ENCODE measurements at regions of chr1 and their contacts with region 1.

Region 1: GRCh38 chr1:211258756-211259637 is at the start of gene RCOR3:
- DNase-seq: peak; percentile 91
- H3K4me3 Mint-ChIP-seq: peak within 1 kb of the TSS; percentile 88
- H3K27ac Mint-ChIP-seq: peak within 1 kb of the TSS; percentile 92
- H3K4me1 Mint-ChIP-seq: peaks cover 19% of the 10 kb centered on the region
- H3K27me3 Mint-ChIP-seq: no peaks in the 10 kb centered on the region
- total RNA-seq, gene RCOR3: 42.3 and 45.0 TPM in 2 replicates

Region 2: DNA sequence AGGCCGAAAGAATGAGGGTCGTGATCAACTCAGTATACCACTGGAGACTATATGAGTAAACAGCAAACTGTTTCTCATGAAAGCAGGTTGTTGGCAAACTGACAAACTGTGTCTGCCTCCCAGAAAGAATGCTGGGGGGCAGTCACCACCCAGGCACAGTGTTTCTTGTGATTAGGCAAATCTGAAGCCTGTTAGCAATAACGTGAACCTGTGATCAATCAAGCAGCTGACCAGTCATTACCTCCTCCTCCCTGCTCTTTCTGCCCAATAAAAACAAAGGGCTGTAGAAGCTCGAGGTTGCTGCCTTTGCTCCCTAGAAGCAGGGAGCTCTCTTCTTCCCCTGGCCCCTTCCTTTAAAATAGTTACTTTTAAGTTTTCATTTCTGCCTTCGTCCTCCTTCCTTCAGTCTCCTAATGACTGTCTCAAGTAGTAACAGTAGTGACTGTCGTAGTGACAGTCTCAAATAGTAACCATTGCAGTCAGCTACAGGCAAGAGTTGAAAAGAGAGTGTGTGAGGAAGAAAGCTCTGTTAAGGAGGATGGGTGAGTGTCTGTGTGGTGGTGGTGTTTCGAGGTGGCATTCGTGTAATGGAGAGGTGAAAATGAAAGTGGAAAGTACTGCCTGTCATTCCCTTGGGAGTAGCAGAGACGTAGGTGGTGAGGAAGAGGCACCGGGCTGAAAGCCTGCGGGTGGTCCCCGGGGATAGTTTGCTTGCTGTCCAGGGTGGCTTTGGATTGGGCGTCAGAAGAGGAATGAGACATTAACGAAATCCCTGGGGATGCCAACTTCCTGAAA is 915.8 kb before region 1 on chr1:
- intact Hi-C with region 1: loop called (anchors 10 kb)
- DNase-seq: no peak
- H3K4me3 Mint-ChIP-seq: no peak overlapping the region
- H3K27ac Mint-ChIP-seq: no peak overlapping the region
- H3K4me1 Mint-ChIP-seq: peaks cover 26% of the 10 kb centered on the region
- H3K27me3 Mint-ChIP-seq: peaks cover under 1% of the 10 kb centered on the region

Region 3: GRCh38 chr1:211229365-211229759 is 29.6 kb before region 1 on chr1:
- intact Hi-C with region 1: loop called (anchors 2 kb)
- DNase-seq: no peak
- H3K4me3 Mint-ChIP-seq: no peak overlapping the region
- H3K27ac Mint-ChIP-seq: peak overlapping the region; percentile 18
- H3K4me1 Mint-ChIP-seq: peaks cover 20% of the 10 kb centered on the region
- H3K27me3 Mint-ChIP-seq: peaks cover 2% of the 10 kb centered on the region

Region 4: GRCh38 chr1:211382714-211383480 is 123.9 kb after region 1 on chr1:
- intact Hi-C with region 1: loop called (anchors 2 kb)
- DNase-seq: peak; percentile 79
- H3K4me3 Mint-ChIP-seq: peak overlapping the region; percentile 85
- H3K27ac Mint-ChIP-seq: peak overlapping the region; percentile 96
- H3K4me1 Mint-ChIP-seq: peaks cover 52% of the 10 kb centered on the region
- H3K27me3 Mint-ChIP-seq: no peaks in the 10 kb centered on the region

Region 5: GRCh38 chr1:211551628-211552460 is 292.8 kb after region 1 on chr1:
- intact Hi-C with region 1: no loop called
- DNase-seq: no peak
- H3K4me3 Mint-ChIP-seq: no peak overlapping the region
- H3K27ac Mint-ChIP-seq: no peak overlapping the region
- H3K4me1 Mint-ChIP-seq: peaks cover 7% of the 10 kb centered on the region
- H3K27me3 Mint-ChIP-seq: peaks cover 9% of the 10 kb centered on the region

Region 6: GRCh38 chr1:212432706-212433576 is 1173.9 kb after region 1 on chr1 and contains the start of gene NENF:
- intact Hi-C with region 1: loop called (anchors 2 kb)
- DNase-seq: peak; percentile 73
- H3K4me3 Mint-ChIP-seq: peak within 1 kb of the TSS; percentile 76
- H3K27ac Mint-ChIP-seq: peak within 1 kb of the TSS; percentile 24
- H3K4me1 Mint-ChIP-seq: peaks cover 27% of the 10 kb centered on the region
- H3K27me3 Mint-ChIP-seq: peaks cover 3% of the 10 kb centered on the region
- total RNA-seq, gene NENF: 41.6 and 42.5 TPM in 2 replicates

Measured in activated T-helper 2 cell treated with anti-CD3 and anti-CD28 coated beads, Interferon-gamma antibody, Interleukin-2, Interleukin-4, amounts not matched to agents 10 μg/mL and 5 μg/mL and 100 μg/mL, durations not matched to agents 14 hours and 24 hours and 36 hours (primary cell).